ENCODE measurements at regions of chr7 and their contacts with region 1.

Region 1: GRCh38 chr7:128387216-128388144 is 22.3 kb downstream of the IMPDH1 start:
- DNase-seq: peak in 1 of 2 donors; percentile 90
- H3K4me3 ChIP-seq: peak overlapping the region in 1 of 2 donors; percentile 38
- H3K27ac ChIP-seq: no peak overlapping the region
- H3K4me1 ChIP-seq: no peaks in the 10 kb centered on the region
- H3K27me3 ChIP-seq: no peaks in the 10 kb centered on the region
- CTCF ChIP-seq: peak; percentile 65 to 84 (median 75)

Region 2: GRCh38 chr7:128343554-128344430 is 43.7 kb before region 1 on chr7 and contains the start of gene RBM28:
- intact Hi-C with region 1: loop called (anchors 1 kb)
- DNase-seq: peak; percentile 59 to 92
- H3K4me3 ChIP-seq: peak within 1 kb of the TSS; percentile 61 to 76
- H3K27ac ChIP-seq: peak within 1 kb of the TSS; percentile 66 to 69
- H3K4me1 ChIP-seq: peaks cover 4 to 13% of the 10 kb centered on the region in 2 donors
- H3K27me3 ChIP-seq: no peaks in the 10 kb centered on the region
- CTCF ChIP-seq: no peak
- total RNA-seq, gene RBM28: 23.8 TPM

Region 3: DNA sequence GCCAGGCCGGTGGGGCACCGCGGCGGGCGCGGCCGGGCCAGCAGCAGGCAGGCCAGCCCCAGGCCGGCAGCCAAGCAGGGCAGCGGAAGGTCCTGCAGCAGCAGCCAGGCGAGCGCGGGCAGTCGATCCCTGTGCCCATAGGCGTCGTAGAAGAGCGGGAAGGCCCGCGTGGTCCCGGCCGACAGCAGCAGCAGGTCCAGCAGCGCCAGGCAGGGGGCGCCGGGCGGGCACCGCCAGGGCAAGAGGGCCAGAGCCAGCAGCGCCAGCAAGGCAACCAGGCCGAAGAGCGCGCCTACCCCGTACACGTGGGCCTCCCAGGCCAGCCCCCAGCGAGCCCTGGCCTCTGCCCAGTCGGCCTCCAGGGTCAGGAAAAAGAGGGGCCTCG is 35.3 kb before region 1 on chr7:
- intact Hi-C with region 1: loop called (anchors 1 kb)
- DNase-seq: peak in 1 of 2 donors; percentile 73
- H3K4me3 ChIP-seq: peak overlapping the region; percentile 51 to 68
- H3K27ac ChIP-seq: no peak overlapping the region
- H3K4me1 ChIP-seq: peaks cover 9 to 10% of the 10 kb centered on the region in 2 donors
- H3K27me3 ChIP-seq: no peaks in the 10 kb centered on the region
- CTCF ChIP-seq: peak; percentile 61 to 70 (median 69)

Region 4: GRCh38 chr7:128425850-128426249 is 38.4 kb after region 1 on chr7:
- intact Hi-C with region 1: loop called (anchors 5 kb)
- DNase-seq: peak in 1 of 2 donors; percentile 80
- H3K4me3 ChIP-seq: no peak overlapping the region
- H3K27ac ChIP-seq: no peak overlapping the region
- H3K4me1 ChIP-seq: no peaks in the 10 kb centered on the region
- H3K27me3 ChIP-seq: no peaks in the 10 kb centered on the region
- CTCF ChIP-seq: peak; percentile 65 to 86 (median 72)

Region 5: DNA sequence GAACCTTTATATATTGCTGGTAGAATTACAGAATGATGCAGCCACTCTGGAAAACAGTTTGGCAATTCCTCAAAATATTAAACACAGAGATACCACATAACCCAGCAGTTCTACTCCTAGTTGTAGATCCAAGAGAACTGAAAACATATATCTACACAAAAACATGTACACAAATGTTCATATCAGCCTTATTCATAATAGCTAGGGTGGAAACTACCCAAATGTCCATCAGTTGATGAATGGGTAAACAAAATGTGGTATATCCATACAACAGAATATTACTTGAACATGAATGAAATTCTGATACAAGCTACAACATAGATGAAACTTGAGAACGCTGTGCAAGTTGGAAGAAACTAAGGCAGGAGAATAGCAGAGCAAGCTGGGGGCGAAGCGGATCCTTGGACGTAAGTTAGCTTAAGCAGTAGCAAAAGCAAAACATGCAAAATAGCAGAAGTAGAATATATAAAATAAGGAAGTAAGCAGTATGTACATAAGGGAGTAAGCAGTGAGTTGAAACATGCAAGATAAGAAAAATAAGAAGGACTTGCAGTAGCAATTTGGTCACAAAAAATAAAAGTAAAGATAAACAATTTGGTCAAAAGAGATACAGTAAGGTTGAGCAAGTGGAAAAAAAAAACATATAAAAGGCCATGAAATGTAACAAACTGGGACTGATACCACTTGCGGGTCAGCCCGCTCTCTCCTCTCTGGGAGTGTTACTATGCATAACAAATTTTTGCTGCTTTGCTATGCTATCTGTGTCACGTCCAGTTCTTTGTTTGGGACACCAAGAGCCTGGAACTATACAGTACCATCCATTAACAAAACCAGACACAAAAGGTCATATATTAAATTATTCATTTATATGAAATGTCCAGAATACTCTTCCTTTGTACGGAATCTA is 50.2 kb after region 1 on chr7:
- intact Hi-C with region 1: no loop called
- DNase-seq: no peak
- H3K4me3 ChIP-seq: no peak overlapping the region
- H3K27ac ChIP-seq: no peak overlapping the region
- H3K4me1 ChIP-seq: no peaks in the 10 kb centered on the region
- H3K27me3 ChIP-seq: no peaks in the 10 kb centered on the region
- CTCF ChIP-seq: no peak

Measured in ascending aorta (tissue), 2 donors.